ENCODE measurements at regions of chr1 and their contacts with region 1.

Region 1: DNA sequence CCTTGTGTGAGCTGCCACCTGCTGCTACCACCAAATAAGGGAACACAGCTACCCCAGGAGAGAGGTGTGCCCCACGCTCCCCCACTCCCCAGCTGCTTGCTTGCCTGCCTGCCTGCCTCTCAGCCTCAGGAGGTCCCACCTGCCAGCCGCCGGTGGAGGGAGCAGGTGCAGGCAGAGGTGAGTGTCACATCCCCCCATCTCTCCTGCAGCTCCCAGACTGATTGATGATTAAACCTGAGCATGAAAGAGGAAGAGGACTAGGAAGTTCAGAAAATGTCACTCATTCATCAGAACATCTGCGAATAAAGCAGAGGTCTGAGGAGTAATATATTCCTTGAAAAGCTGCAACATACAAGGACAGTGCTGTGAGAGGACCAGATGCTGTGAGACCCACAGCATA is 58.6 kb upstream of the HIVEP3 start:
- DNase-seq: no peak
- ATAC-seq: no peak
- H3K4me3 ChIP-seq: no peak overlapping the region
- H3K27ac ChIP-seq: no peak overlapping the region
- H3K4me1 ChIP-seq: no peaks in the 10 kb centered on the region
- H3K27me3 ChIP-seq: peaks cover 2 to 7% of the 10 kb centered on the region in 2 experiments; a peak in 3 of 5 replicates
- CTCF ChIP-seq: no peak
- EP300 ChIP-seq: no peak
- POLR2A ChIP-seq: no peak
- RAD21 ChIP-seq: no peak

Region 2: GRCh38 chr1:41919764-41920397 is 57.4 kb before region 1 on chr1:
- CTCF ChIA-PET with region 1: no interaction called
- POLR2A ChIA-PET with region 1: no interaction called
- in situ Hi-C with region 1: loop called (anchors 10 kb)
- intact Hi-C with region 1: no loop called
- DNase-seq: no peak
- ATAC-seq: no peak
- H3K4me3 ChIP-seq: no peak overlapping the region
- H3K27ac ChIP-seq: no peak overlapping the region
- H3K4me1 ChIP-seq: no peaks in the 10 kb centered on the region
- H3K27me3 ChIP-seq: peaks cover 1 to 19% of the 10 kb centered on the region in 2 experiments; a peak in 4 of 5 replicates
- CTCF ChIP-seq: no peak
- EP300 ChIP-seq: no peak
- POLR2A ChIP-seq: no peak
- RAD21 ChIP-seq: no peak